ENCODE measurements at regions of chr15 and their contacts with region 1.

Region 1: DNA sequence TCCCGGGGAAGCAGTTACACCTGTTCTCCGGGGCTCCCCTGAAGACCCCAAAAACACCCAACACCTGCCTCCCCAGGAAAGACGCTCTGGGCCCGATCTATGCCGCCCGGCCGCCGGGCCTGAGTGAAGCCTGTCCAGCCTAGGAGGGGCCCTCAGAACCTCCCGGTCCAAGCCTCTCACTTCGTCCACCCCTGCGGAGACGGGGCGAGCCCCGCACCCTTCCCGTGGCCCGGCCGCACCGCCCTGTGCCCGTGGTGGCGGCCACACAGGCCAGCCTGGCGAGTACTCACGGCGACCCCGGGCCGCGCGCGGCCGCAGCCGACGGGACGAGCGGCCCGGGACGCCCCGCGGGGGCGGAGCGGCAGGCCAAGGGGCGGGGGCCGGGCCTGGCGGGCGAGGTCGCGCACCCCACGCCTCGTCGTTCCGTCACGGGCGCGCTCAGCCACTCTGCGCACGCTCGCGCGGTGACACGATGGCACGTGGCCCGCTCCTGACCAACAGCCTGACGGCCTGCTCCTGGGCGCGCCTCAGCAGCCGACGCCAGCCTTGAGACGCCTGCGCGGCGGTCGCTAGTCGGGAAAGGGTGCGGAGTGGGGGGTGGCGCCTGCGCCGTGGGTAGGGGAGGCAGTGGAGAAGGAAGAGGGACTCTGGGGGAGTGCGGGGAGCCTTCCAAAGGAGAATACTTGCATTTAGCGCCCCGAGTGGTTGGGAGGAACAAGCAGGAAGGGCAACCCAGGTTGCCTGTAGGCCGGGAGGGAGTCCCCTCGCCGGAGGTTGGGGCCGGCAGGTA is at the start of gene PARP6:
- DNase-seq: peak; percentile 95 to 100 (median 98)
- ATAC-seq: peak; percentile 94
- H3K4me3 ChIP-seq: peak within 1 kb of the TSS; percentile 89
- H3K4me3 Mint-ChIP-seq: peak within 1 kb of the TSS; percentile 92
- H3K27ac ChIP-seq: peak within 1 kb of the TSS; percentile 76 to 79
- H3K27ac Mint-ChIP-seq: peak within 1 kb of the TSS; percentile 93
- H3K4me1 ChIP-seq: peaks cover 25% of the 10 kb centered on the region
- H3K4me1 Mint-ChIP-seq: peaks cover 47% of the 10 kb centered on the region
- H3K27me3 ChIP-seq: no peaks in the 10 kb centered on the region
- H3K27me3 Mint-ChIP-seq: no peaks in the 10 kb centered on the region
- CTCF ChIP-seq: peak; percentile 80
- total RNA-seq, gene PARP6: 128 to 133 TPM

Region 2: GRCh38 chr15:72117486-72118399 is 154.7 kb before region 1 on chr15 and contains the start of gene MYO9A:
- CTCF ChIA-PET with region 1: interaction called, 4 read pairs
- POLR2A ChIA-PET with region 1: interaction called, 3 read pairs
- intact Hi-C with region 1: loop called (anchors 1 to 2 kb)
- DNase-seq: peak; percentile 97 to 99 (median 99)
- ATAC-seq: peak; percentile 79
- H3K4me3 ChIP-seq: peak within 1 kb of the TSS; percentile 74
- H3K4me3 Mint-ChIP-seq: peak within 1 kb of the TSS; percentile 98
- H3K27ac ChIP-seq: peak within 1 kb of the TSS; percentile 91 to 92
- H3K27ac Mint-ChIP-seq: peak within 1 kb of the TSS; percentile 97
- H3K4me1 ChIP-seq: peaks cover 15% of the 10 kb centered on the region
- H3K4me1 Mint-ChIP-seq: peaks cover 60% of the 10 kb centered on the region
- H3K27me3 ChIP-seq: no peaks in the 10 kb centered on the region
- H3K27me3 Mint-ChIP-seq: no peaks in the 10 kb centered on the region
- CTCF ChIP-seq: no peak
- total RNA-seq, gene MYO9A: 23.4 to 29.1 TPM

Region 3: DNA sequence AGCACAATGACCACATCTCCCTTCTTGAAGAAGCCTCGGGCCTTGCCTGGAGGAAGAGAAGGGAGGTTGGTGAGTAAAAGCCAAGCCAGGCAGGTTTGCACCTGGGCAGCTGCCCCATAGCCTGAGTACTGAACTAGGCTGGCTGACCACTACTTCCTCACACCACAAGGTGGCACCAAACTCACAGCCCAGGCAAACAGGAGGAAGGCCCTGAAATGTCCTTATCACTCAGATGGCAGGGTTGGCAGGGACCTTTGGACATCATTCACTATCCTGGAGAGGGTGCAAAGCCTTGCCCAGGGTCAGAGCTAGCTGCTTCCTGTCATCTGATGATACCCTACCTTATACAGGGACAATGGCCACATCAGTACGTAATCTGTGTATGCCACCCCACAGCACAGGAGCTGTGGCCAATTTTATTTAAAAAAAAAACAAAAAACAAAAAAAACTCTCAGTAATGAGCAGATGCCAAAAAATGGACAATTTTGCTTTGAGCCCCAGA is 72.6 kb before region 1 on chr15:
- CTCF ChIA-PET with region 1: interaction called, 10 read pairs
- POLR2A ChIA-PET with region 1: interaction called, 3 read pairs
- intact Hi-C with region 1: loop called in 1 of 2 experiments (anchors 5 kb)
- DNase-seq: peak; percentile 61 to 86 (median 70)
- ATAC-seq: peak; percentile 87
- H3K4me3 ChIP-seq: no peak overlapping the region
- H3K4me3 Mint-ChIP-seq: peak overlapping the region; percentile 4
- H3K27ac ChIP-seq: no peak overlapping the region
- H3K27ac Mint-ChIP-seq: no peak overlapping the region
- H3K4me1 ChIP-seq: peaks cover 15% of the 10 kb centered on the region
- H3K4me1 Mint-ChIP-seq: peaks cover 9% of the 10 kb centered on the region
- H3K27me3 ChIP-seq: peaks cover 11 to 13% of the 10 kb centered on the region in 2 experiments
- H3K27me3 Mint-ChIP-seq: peaks cover 17% of the 10 kb centered on the region
- CTCF ChIP-seq: peak; percentile 91

Region 4: DNA sequence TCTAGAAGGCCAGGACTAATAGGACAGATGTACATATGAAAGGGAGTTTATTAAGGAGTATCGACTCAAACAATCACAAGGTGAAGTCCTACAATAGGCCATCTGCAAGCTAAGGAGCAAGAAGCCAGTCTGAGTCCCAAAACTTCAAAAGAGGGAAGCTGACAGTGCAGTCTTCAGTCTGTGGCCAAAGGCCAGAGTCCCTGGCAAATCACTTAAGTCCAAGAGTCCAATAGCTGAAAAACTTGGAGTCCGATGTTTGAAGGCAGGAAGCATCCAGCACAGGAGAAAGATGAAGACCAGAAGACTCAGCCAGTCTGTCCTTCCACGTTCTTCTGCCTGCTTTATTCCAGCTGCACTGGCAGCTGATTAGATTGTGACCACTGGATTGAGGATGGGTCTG is 58.6 kb after region 1 on chr15:
- CTCF ChIA-PET with region 1: no interaction called
- POLR2A ChIA-PET with region 1: no interaction called
- intact Hi-C with region 1: no loop called
- DNase-seq: no peak
- ATAC-seq: no peak
- H3K4me3 ChIP-seq: no peak overlapping the region
- H3K4me3 Mint-ChIP-seq: no peak overlapping the region
- H3K27ac ChIP-seq: no peak overlapping the region
- H3K27ac Mint-ChIP-seq: no peak overlapping the region
- H3K4me1 ChIP-seq: no peaks in the 10 kb centered on the region
- H3K4me1 Mint-ChIP-seq: no peaks in the 10 kb centered on the region
- H3K27me3 ChIP-seq: no peaks in the 10 kb centered on the region
- H3K27me3 Mint-ChIP-seq: no peaks in the 10 kb centered on the region
- CTCF ChIP-seq: no peak

Region 5: DNA sequence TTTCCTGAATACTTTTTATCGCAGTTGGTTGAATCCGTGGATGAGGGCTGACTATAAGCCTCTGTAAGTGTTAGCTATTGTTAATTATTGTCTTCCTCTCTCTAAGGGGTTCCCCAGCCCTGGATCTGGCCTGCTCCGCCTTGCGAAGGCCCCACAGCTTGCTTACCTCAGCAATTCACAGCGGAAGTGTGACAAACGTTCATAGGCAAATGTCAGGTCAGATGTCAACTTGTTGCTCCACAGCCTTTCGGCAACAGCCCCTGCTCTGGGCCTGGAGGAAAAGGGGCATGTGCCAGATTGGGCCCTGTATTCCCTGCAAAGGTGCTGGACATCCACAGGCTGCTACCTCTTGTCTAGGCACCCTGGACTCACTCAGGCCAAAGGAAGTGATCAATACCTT is 72.9 kb after region 1 on chr15:
- CTCF ChIA-PET with region 1: no interaction called
- POLR2A ChIA-PET with region 1: no interaction called
- intact Hi-C with region 1: no loop called
- DNase-seq: no peak
- ATAC-seq: no peak
- H3K4me3 ChIP-seq: no peak overlapping the region
- H3K4me3 Mint-ChIP-seq: no peak overlapping the region
- H3K27ac ChIP-seq: no peak overlapping the region
- H3K27ac Mint-ChIP-seq: no peak overlapping the region
- H3K4me1 ChIP-seq: no peaks in the 10 kb centered on the region
- H3K4me1 Mint-ChIP-seq: no peaks in the 10 kb centered on the region
- H3K27me3 ChIP-seq: no peaks in the 10 kb centered on the region
- H3K27me3 Mint-ChIP-seq: no peaks in the 10 kb centered on the region
- CTCF ChIP-seq: no peak

Region 6: GRCh38 chr15:72358650-72359288 is 86.4 kb after region 1 on chr15:
- CTCF ChIA-PET with region 1: no interaction called
- POLR2A ChIA-PET with region 1: no interaction called
- intact Hi-C with region 1: no loop called
- DNase-seq: peak in 1 of 14 experiments; percentile 30
- ATAC-seq: no peak
- H3K4me3 ChIP-seq: no peak overlapping the region
- H3K4me3 Mint-ChIP-seq: no peak overlapping the region
- H3K27ac ChIP-seq: peak overlapping the region in 1 of 2 donors; percentile 4
- H3K27ac Mint-ChIP-seq: peak overlapping the region; percentile 60
- H3K4me1 ChIP-seq: peaks cover 14% of the 10 kb centered on the region
- H3K4me1 Mint-ChIP-seq: peaks cover 24% of the 10 kb centered on the region
- H3K27me3 ChIP-seq: no peaks in the 10 kb centered on the region
- H3K27me3 Mint-ChIP-seq: no peaks in the 10 kb centered on the region
- CTCF ChIP-seq: no peak

Region 7: DNA sequence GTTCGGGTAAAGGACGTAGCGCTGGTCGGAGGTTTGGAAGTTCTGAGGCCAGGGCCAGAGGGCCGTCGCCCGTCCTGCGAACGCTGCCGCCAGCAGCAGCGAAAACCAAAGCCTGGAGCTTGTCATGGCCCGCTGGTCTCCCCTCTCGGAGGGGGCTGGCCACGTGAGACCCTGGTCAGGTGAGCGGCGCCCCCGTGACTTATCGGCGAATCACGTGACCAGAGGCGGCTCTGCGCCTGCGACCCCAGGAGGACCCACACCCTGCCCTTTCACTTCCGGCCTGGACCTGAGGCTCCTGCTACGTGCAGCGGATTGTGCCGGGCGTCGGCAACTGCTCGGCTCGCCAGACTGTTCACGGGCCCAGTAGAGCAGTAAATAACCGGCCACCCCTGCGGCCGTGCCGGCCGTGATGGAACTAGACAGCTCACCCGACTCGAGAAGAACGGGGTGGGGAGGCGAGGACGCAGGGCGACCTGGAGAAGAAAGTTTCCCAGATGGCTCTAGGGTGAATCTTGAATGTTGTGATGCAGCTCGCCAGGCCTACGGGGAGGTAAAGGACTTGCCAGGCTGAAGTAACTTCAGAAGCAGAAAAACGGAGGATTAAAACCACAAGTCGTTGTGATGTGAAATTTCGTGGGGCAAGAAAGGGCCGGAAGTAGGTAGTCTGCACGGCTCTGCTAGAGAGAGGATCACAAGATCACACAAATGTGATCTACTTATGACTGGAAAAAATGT is 103.6 kb after region 1 on chr15 and contains the start of gene HEXA:
- CTCF ChIA-PET with region 1: no interaction called
- POLR2A ChIA-PET with region 1: interaction called, 4 read pairs
- intact Hi-C with region 1: loop called (anchors 5 to 10 kb)
- DNase-seq: peak; percentile 89 to 97 (median 94)
- ATAC-seq: peak; percentile 68
- H3K4me3 ChIP-seq: peak within 1 kb of the TSS; percentile 87
- H3K4me3 Mint-ChIP-seq: peak within 1 kb of the TSS; percentile 94
- H3K27ac ChIP-seq: peak within 1 kb of the TSS; percentile 76 to 86
- H3K27ac Mint-ChIP-seq: peak within 1 kb of the TSS; percentile 96
- H3K4me1 ChIP-seq: peaks cover 28% of the 10 kb centered on the region
- H3K4me1 Mint-ChIP-seq: peaks cover 57% of the 10 kb centered on the region
- H3K27me3 ChIP-seq: no peaks in the 10 kb centered on the region
- H3K27me3 Mint-ChIP-seq: peaks cover 9% of the 10 kb centered on the region
- CTCF ChIP-seq: no peak
- total RNA-seq, gene HEXA: 66.3 to 66.9 TPM

Region 8: DNA sequence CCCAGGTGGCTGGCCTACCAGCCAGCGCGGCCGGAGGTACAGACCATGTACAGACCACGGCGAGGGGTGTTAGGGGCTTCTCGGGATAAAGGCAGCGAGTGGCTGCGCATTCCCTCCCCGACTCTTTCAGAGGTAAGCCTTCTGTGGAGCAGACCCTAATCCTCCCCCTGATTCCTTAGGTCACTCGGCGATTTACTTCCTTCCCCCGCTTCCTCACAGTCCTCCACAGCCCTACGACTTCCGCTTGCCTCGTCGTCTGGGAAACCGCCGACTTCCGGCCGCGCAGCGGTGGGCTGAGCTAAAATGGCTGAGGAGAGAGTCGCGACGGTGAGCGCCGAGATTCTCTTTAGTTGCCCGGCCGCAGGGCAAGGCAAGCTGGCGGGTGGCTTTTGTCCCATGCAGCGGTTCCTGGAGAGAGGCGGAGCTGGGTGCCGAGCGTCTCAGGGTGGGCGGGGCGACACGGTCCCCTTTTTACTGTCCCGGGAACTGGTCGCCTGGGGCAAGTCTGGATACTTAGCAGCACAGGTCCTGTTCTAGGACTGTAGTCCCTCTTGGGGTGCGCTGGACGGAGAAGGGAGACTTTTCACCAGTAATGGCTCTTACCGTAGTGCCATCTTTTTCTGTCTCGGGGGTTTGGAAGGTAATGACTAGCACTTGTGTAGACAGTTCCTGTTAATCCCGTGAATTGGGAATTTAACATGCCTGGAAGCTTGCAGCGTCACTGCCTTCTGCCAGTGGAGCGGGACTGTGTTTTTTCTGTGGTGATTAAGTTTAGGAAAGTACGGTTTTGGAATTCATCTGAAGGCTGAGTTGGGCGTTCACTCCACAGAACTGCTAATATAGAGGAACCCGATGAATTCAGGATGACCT is 413.8 kb after region 1 on chr15 and contains the starts of genes BBS4 and HIGD2B:
- CTCF ChIA-PET with region 1: no interaction called
- POLR2A ChIA-PET with region 1: no interaction called
- intact Hi-C with region 1: loop called in 1 of 2 experiments (anchors 5 kb)
- DNase-seq: peak; percentile 71 to 93 (median 82)
- ATAC-seq: peak; percentile 92
- H3K4me3 ChIP-seq: peak within 1 kb of the TSS; percentile 75
- H3K4me3 Mint-ChIP-seq: peak within 1 kb of the TSS; percentile 94
- H3K27ac ChIP-seq: peak within 1 kb of the TSS; percentile 77 to 81
- H3K27ac Mint-ChIP-seq: peak within 1 kb of the TSS; percentile 96
- H3K4me1 ChIP-seq: peaks cover 17% of the 10 kb centered on the region
- H3K4me1 Mint-ChIP-seq: peaks cover 18% of the 10 kb centered on the region
- H3K27me3 ChIP-seq: no peaks in the 10 kb centered on the region
- H3K27me3 Mint-ChIP-seq: no peaks in the 10 kb centered on the region
- CTCF ChIP-seq: no peak
- total RNA-seq, gene BBS4: 8.6 to 12.8 TPM
- total RNA-seq, gene HIGD2B: 0.28 TPM in 1 of 2 experiments, not detected in the other

Region 9: DNA sequence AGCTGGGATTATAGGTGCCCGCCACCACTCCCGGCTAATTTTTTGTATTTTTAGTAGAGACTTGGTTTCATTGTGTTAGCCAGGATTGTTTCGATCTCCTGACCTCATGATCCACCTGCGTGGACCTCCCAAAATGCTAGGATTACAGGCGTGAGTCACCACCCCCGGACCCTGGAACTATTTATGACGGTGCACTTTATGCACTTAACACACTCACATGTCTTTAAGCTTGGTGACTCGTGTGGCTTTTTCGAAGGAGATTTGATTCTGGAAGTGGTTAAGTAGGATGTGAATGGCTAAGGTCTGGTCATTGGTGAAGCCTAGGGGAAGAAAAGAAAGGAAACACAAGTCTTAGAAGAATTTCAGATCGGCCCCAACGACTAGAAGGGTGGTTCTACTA is 433.9 kb after region 1 on chr15:
- CTCF ChIA-PET with region 1: no interaction called
- POLR2A ChIA-PET with region 1: no interaction called
- intact Hi-C with region 1: no loop called
- DNase-seq: no peak
- ATAC-seq: no peak
- H3K4me3 ChIP-seq: no peak overlapping the region
- H3K4me3 Mint-ChIP-seq: no peak overlapping the region
- H3K27ac ChIP-seq: no peak overlapping the region
- H3K27ac Mint-ChIP-seq: no peak overlapping the region
- H3K4me1 ChIP-seq: no peaks in the 10 kb centered on the region
- H3K4me1 Mint-ChIP-seq: peaks cover under 1% of the 10 kb centered on the region
- H3K27me3 ChIP-seq: no peaks in the 10 kb centered on the region
- H3K27me3 Mint-ChIP-seq: no peaks in the 10 kb centered on the region
- CTCF ChIP-seq: no peak

Region 10: GRCh38 chr15:73051811-73052678 is 779.6 kb after region 1 on chr15 and contains the start of gene NEO1:
- CTCF ChIA-PET with region 1: no interaction called
- POLR2A ChIA-PET with region 1: no interaction called
- intact Hi-C with region 1: loop called in 1 of 2 experiments (anchors 5 kb)
- DNase-seq: peak; percentile 71 to 93 (median 80)
- ATAC-seq: peak; percentile 81
- H3K4me3 ChIP-seq: peak within 1 kb of the TSS; percentile 85
- H3K4me3 Mint-ChIP-seq: peak within 1 kb of the TSS; percentile 91
- H3K27ac ChIP-seq: peak within 1 kb of the TSS in 1 of 2 donors; percentile 50
- H3K27ac Mint-ChIP-seq: peak within 1 kb of the TSS; percentile 85
- H3K4me1 ChIP-seq: peaks cover 11% of the 10 kb centered on the region
- H3K4me1 Mint-ChIP-seq: peaks cover 14% of the 10 kb centered on the region
- H3K27me3 ChIP-seq: peaks cover 0 to 7% of the 10 kb centered on the region in 2 experiments
- H3K27me3 Mint-ChIP-seq: peaks cover 11% of the 10 kb centered on the region
- CTCF ChIP-seq: no peak
- total RNA-seq, gene NEO1: 6.0 to 8.0 TPM

Measured in CD4-positive, alpha-beta T cell (primary cell).